Common myeloid progenitor, CD34-positive (primary cell): ENCODE measurements at regions of chr9 and their contacts with region 1.

Region 1: DNA sequence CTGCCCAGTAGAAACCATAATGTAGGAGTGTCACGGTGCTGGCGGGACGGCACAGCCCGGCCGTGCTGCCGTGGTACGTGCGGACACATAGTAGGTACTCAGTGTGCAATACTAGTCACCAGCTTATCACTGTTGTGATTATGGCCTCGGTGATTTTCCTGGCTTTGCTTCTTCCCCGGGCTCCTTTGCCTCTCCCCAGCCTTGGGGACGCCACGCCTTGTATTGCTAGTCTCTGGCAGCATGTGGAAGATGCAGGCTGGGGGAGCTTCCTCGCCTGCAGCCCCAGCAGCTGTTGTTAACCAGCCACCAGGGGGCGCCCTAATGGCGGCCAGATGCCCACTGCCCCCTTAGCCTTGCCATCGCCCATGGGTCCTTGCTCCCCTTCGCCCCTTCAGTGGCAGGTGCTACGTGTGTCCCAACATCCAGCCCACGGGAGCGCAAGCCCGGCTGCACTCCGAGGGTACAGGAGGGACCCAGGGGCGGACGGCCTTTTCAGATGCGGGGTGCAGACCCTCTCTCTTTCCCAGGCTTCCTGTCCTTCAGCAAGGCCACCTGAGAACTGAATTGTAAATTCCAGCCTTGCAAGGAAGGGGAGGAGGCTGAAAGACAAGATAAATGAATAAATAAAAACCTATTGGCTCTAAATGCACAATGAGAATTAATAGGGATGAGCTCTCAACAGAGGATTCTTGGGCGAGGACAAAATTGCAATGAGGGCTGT is 8.0 kb downstream of the NTNG2 start:
- DNase-seq: peak; percentile 61 to 76 (median 74)
- H3K4me3 ChIP-seq: no peak overlapping the region
- H3K27ac ChIP-seq: no peak overlapping the region
- H3K4me1 ChIP-seq: no peaks in the 10 kb centered on the region
- H3K27me3 ChIP-seq: peaks cover 2 to 53% (median 27%) of the 10 kb centered on the region in 5 experiments

Region 2: GRCh38 chr9:132240753-132241493 is 71.1 kb after region 1 on chr9:
- CTCF ChIA-PET with region 1: interaction called, 111 read pairs
- POLR2A ChIA-PET with region 1: no interaction called
- DNase-seq: peak; percentile 97 to 99 (median 97)
- H3K4me3 ChIP-seq: peak overlapping the region; percentile 68 to 90 (median 77)
- H3K27ac ChIP-seq: no peak overlapping the region
- H3K4me1 ChIP-seq: peaks cover 0 to 33% (median 23%) of the 10 kb centered on the region in 4 experiments
- H3K27me3 ChIP-seq: peaks cover 0 to 20% (median 14%) of the 10 kb centered on the region in 5 experiments